Ascending aorta (tissue), 2 donors: ENCODE measurements at regions of chr1 and their contacts with region 1.

Region 1: DNA sequence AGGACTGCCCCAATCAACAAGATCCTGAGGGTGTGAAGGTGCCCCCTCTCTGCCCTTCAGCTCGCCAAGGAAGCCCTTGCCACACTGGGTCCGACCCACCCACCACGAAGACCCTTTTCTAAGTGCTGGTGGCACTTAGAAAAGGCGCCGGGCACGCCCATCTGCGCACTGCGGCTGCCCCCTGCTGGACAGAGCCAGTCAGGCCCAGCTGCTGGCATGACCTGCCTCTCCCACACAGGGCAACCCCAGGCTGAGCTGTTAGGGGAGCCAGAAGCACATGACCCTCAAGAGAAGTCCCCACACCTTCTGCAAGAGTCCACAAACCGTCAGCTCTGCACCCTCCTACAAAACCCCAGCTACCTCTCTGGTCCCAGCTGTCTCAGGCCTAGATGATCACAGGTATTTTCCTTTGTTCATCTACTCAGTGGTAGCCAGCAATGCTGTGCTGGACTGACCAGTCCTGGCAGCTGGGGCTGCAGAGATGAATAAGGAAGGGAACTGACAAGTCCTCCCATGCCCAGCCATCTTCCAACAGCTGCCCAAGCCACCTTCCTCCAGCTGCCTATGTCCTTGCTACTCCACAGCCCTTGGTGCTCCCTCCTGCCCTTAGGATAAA is 40.0 kb upstream of the ZC3H12A start:
- DNase-seq: no peak
- H3K4me3 ChIP-seq: no peak overlapping the region
- H3K27ac ChIP-seq: no peak overlapping the region
- H3K4me1 ChIP-seq: no peaks in the 10 kb centered on the region
- H3K27me3 ChIP-seq: no peaks in the 10 kb centered on the region
- CTCF ChIP-seq: peak; percentile 61 to 82 (median 76)

Region 2: DNA sequence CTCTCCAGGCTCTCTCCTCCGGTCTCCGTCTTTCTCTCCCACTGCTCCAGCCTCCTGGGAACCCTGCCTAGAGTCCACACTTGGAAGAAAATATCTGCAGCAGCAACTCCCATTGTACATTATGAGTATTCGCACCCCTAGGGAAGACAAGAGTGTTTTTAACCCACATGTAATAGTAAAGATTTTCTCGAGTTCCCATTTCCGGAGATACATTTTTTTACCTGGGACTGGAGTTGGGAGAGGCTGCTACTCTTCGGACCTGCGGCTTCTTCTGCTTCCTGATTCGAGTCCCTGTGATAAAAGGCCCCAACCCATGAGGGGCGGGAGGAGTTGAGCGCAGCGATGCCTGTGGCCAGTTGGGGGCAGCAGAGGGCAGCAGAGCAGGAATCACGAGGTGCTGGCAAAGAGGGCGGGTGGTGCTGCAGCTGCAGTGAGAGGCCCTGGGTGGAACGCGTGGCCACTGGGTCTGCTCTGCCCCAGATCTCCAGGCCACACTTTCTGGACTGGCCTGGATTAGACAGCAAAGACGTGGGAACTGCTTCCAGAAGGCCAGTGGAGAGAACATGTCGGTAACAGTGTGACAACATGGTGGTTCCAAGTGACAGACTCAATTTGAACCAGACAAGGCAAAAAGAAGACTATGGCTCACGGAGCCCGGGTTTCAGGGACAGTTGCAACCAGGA is 730.7 kb before region 1 on chr1:
- intact Hi-C with region 1: loop called (anchors 5 kb)
- DNase-seq: peak in 1 of 2 donors; percentile 68
- H3K4me3 ChIP-seq: no peak overlapping the region
- H3K27ac ChIP-seq: no peak overlapping the region
- H3K4me1 ChIP-seq: no peaks in the 10 kb centered on the region
- H3K27me3 ChIP-seq: no peaks in the 10 kb centered on the region
- CTCF ChIP-seq: peak; percentile 45 to 67 (median 49)

Region 3: DNA sequence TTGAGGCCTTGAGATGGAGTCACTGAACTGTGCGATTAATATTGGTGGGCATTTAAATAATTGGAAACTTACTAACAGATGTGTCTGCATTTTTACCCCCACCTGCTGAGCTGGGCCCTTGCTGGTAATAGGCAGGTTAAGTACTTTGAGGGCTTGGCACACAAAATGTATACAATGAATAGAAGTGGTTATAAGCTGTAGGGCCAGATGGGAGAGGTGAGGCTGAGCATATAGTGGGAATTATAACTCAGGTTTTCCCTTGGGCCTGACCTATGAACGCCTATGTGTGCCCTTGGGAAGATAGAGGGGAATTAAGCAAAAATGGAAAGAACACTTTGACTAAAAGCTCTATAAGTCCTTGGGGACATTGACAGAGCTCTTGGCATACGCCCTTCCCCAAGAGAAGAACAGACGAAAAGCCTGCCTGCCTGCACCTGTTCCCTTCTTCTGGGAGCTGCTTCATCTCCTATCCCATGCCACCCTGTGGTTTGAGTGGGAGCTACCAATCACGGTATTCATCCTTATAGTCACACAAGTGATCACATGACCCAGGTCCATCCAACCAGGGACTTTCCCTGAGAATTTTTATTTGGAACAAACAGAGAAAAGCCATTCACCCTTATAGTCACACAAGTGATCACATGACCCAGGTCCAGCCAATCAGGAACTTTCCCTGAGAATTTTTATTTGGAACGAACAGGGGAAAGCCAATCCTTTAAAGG is 691.0 kb before region 1 on chr1:
- intact Hi-C with region 1: no loop called
- DNase-seq: no peak
- H3K4me3 ChIP-seq: no peak overlapping the region
- H3K27ac ChIP-seq: no peak overlapping the region
- H3K4me1 ChIP-seq: no peaks in the 10 kb centered on the region
- H3K27me3 ChIP-seq: no peaks in the 10 kb centered on the region
- CTCF ChIP-seq: no peak

Region 4: DNA sequence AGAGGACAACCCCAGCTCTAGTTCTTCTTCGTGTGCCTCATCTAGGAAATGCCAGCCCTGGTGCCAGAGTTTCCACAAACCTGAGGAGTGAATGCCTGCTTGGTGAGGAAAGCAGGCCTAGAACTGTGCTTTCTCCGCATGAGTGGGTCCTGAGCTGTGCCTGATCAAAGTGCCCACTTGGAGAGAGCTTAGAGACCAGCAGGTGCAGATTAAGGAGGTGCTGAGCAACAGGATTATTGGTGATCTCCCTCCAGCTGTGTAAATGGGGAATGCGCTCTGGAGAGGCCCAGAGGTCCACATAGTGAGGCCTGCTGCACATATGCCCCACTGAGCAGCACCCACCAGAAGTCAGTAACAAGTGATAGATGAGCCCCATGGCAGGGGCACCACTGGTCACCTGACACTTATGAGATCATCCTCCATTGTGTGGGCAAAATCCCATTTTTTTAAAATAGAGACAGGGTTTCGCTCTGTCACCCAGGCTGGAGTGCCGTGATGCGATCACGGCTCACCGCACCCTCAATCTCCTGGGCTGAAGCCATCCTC is 87.2 kb before region 1 on chr1:
- intact Hi-C with region 1: no loop called
- DNase-seq: no peak
- H3K4me3 ChIP-seq: no peak overlapping the region
- H3K27ac ChIP-seq: no peak overlapping the region
- H3K4me1 ChIP-seq: no peaks in the 10 kb centered on the region
- H3K27me3 ChIP-seq: no peaks in the 10 kb centered on the region
- CTCF ChIP-seq: no peak